Activated T-helper 2 cell treated with anti-CD3 and anti-CD28 coated beads, Interferon-gamma antibody, Interleukin-2, Interleukin-4, amounts not matched to agents 10 μg/mL and 5 μg/mL and 100 μg/mL, durations not matched to agents 14 hours and 24 hours and 36 hours (primary cell): ENCODE measurements at regions of chr12 and their contacts with region 1.

Region 1: GRCh38 chr12:27034607-27035293 is 12.4 kb downstream of the MED21 start:
- DNase-seq: no peak
- H3K4me3 Mint-ChIP-seq: no peak overlapping the region
- H3K27ac Mint-ChIP-seq: no peak overlapping the region
- H3K4me1 Mint-ChIP-seq: peaks cover under 1% of the 10 kb centered on the region
- H3K27me3 Mint-ChIP-seq: no peaks in the 10 kb centered on the region

Region 2: DNA sequence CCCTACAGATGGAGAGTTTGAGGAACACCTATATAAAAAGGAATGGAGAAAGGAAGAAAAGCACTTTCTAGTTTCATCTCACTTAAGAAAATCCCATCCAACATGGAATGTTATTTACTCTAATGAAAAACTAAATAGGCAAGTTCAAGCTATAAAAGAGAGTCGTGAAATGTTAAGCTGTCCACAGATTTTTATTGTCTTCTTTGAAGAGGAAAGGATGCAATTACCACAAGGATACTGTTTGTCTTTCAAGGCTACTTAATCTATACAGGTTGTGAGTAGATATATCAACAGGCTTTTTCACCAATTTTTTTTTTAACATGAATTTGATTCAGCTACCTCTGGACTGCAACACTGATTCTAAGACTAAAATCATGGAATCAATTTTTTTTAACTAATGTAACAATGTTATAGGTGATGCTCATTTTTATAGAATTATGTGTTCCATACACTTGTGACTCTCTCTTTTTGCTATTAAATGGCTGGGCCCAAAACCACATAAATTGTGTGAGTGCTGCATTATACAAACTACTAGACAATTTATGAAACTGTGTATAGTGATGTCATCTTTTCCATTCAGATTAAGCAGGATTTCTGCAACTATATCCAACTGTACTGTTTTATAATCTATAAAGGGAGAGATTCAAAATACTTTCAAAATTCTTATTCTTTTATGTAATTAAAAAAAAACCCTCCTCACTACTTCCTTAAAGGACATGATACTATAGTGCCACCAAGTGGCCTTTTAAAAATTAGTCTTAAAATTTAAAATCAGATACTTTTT is 271.1 kb after region 1 on chr12:
- intact Hi-C with region 1: loop called (anchors 1 kb)
- DNase-seq: no peak
- H3K4me3 Mint-ChIP-seq: no peak overlapping the region
- H3K27ac Mint-ChIP-seq: peak overlapping the region; percentile 28
- H3K4me1 Mint-ChIP-seq: peaks cover 17% of the 10 kb centered on the region
- H3K27me3 Mint-ChIP-seq: no peaks in the 10 kb centered on the region